ENCODE measurements at regions of chr11 and their contacts with region 1.

Region 1: DNA sequence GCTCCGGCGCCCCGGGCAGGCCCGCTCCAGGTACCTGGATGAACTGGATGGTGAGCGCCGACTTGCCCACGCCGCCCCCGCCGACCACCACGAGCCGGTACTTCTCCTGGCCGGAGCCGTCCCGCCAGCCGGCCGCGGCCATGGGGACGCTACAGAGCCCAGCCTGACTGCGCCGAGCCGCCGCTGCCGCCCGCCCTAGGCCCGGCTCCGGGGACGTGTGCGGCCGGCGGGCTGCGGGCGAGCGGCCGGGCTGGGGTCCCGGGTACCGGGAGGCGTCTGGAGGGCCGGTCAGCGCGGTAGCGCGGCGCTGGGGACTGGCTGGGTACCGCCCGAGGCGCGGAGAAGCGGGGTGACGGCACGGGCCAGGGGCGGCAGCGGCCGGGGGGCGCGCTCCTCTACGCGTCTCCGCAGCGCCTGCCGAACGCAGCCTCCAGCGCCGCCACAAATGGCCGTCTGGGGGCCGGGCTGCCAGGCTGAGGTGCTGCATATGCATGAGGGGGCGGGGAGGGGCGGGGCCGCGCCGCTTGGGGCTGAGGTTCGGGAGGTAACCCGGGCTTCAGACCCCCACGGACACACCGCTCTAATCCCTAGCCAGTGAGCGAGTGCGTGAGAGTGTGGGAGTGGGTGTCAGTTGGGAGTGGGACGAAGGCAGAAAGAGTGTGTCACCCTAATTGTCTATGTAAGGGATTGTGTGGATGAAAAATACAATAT is at the start of gene RRAS2:
- DNase-seq: peak; percentile 46 to 63
- H3K4me3 ChIP-seq: peak within 1 kb of the TSS; percentile 67
- H3K27ac ChIP-seq: peak within 1 kb of the TSS; percentile 58
- H3K4me1 ChIP-seq: peaks cover 23% of the 10 kb centered on the region
- H3K27me3 ChIP-seq: no peaks in the 10 kb centered on the region
- CTCF ChIP-seq: no peak
- total RNA-seq, gene RRAS2: 30.7 and 42.2 TPM in 2 replicates

Region 2: DNA sequence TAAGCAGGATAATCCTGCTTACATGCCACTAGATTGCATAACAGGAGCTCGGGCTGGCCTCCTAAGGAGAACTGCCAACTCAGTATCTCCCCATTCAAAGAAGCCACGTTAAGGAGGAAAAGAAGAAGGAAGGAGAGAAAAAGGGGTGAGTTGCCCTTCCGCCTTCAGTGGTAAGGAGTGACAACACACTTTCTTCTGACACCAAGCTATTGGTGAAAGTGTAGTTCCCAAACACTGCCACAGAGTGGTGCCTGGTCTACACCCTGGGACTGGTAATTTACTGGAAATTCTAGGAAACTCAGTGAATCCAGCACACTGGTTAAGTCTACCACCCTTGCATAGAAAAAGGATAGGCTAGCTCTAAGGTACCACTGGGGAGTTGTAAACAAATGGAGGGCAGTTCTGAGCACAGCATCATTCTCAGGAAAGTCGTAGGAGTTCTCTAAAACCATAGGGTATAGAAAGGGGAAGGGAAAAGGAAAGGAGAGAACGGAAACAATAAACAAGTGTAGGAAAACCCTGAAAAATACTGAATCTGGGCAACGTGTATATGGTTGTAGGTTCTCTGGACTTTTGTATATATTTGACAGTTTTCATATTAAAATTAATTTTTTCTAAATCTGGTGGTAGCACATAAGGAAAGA is 58.1 kb before region 1 on chr11:
- CTCF ChIA-PET with region 1: no interaction called
- POLR2A ChIA-PET with region 1: interaction called, 6 read pairs
- intact Hi-C with region 1: loop called (anchors 5 kb)
- DNase-seq: peak; percentile 44
- H3K4me3 ChIP-seq: no peak overlapping the region
- H3K27ac ChIP-seq: no peak overlapping the region
- H3K4me1 ChIP-seq: no peaks in the 10 kb centered on the region
- H3K27me3 ChIP-seq: no peaks in the 10 kb centered on the region
- CTCF ChIP-seq: peak; percentile 78

Region 3: DNA sequence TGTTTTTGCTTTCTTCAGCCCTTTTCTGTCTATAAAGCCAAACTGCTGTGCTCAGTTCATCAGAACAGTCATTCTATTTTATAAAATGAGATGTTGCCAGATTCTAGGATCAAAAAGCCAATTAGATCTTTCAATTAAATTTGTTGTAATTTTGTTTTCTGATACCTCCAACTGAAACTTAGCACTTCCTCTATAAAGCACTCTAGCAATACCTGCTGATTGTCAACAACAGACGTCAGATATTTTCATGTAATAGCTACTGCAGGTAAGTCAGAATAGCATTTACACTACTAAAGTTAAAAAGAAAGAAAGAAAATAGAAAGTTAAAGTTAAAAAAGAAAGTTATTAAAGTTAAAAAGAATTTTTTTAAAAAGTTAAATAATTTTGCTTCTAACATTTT is 19.5 kb before region 1 on chr11:
- CTCF ChIA-PET with region 1: interaction called, 3 read pairs
- POLR2A ChIA-PET with region 1: interaction called, 11 read pairs
- intact Hi-C with region 1: no loop called
- DNase-seq: no peak
- H3K4me3 ChIP-seq: no peak overlapping the region
- H3K27ac ChIP-seq: no peak overlapping the region
- H3K4me1 ChIP-seq: no peaks in the 10 kb centered on the region
- H3K27me3 ChIP-seq: no peaks in the 10 kb centered on the region
- CTCF ChIP-seq: no peak

Measured in PC-9 (cell line).